ENCODE measurements at regions of chr14 and their contacts with region 1.

Region 1: DNA sequence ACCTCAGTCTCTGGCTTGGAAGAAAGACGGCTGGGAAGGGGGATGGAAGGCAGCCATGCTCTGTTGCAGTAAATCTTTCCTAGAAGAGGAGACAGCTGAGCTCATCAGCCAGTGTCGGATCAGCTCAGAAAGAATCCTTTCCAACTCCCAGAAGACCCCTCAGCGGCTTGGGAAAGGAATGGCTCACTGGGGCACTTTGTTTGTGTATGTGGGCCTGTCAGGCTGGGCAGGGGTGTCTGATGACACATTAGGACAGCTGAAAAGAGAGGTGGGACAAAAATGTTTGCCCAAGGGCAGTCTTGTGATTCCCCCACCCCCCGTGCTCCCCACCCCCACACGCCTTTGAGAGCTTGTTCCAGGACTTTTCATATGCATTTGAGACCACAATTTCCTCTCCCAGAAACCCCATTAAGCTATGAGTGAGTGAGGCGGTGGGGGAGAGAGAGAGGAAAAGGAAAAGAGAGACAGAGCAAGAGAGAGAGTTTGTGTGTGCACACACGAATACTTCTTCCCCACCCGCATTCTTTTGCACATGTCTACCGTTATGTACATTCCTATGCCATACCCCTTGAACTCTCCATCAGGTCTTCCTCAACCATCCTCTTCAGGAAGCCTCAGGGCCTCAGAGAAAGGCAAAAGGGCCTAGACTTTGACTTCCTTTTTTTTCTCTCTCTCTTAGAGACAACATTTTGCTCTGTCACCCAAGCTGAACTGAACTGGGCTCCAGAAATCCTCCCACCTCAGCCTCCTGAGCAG is 198.9 kb downstream of the ZFP36L1 start:
- DNase-seq: no peak
- H3K4me3 ChIP-seq: no peak overlapping the region
- H3K27ac ChIP-seq: peak overlapping the region in 2 of 4 donors; percentile 16 to 92
- H3K4me1 ChIP-seq: peaks cover 0 to 61% (median 43%) of the 10 kb centered on the region in 4 donors
- H3K27me3 ChIP-seq: no peaks in the 10 kb centered on the region
- CTCF ChIP-seq: no peak
- EP300 ChIP-seq: no peak
- POLR2A ChIP-seq: no peak

Region 2: GRCh38 chr14:68386950-68387779 is 206.8 kb before region 1 on chr14:
- intact Hi-C with region 1: loop called (anchors 5 kb)
- DNase-seq: no peak
- H3K4me3 ChIP-seq: no peak overlapping the region
- H3K27ac ChIP-seq: peak overlapping the region in 3 of 4 donors; percentile 42 to 77 (median 74)
- H3K4me1 ChIP-seq: peaks cover 0 to 77% (median 58%) of the 10 kb centered on the region in 4 donors
- H3K27me3 ChIP-seq: no peaks in the 10 kb centered on the region
- CTCF ChIP-seq: no peak
- EP300 ChIP-seq: peak in 2 of 4 donors; percentile 58 to 64
- POLR2A ChIP-seq: no peak

Region 3: DNA sequence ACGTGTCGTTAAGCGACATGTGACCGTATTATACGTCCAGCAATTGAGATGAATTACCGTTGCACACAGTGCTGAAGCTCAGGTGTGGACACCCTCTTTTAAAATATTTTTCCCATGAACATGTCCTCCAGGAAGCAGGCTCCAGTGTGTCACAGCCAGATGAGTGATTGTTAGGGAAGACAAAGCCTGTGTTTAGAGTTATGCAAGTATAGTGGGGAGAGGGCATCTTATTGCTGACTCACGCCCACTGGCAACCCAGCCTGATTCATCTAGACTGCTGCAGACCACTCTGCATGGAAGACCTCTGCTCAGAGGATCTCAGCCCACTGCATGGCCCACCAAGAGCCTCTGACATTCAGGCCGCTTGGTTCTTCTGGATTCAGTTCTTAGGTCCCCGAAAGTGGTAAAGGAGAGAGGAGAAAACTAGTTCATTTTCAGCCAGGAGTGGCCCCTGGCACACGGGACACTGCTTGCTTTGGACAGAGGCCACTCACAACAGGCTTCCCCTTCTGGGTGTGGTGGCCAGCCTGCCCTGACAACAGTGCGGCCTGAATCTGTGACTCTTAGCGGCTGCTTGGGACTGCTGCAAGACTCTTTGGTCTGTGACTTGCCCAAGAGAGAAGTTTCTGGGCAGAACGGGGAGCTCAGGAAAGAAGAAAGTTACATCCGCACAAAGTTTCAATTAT is 67.4 kb before region 1 on chr14:
- intact Hi-C with region 1: loop called (anchors 2 kb)
- DNase-seq: no peak
- H3K4me3 ChIP-seq: no peak overlapping the region
- H3K27ac ChIP-seq: peak overlapping the region; percentile 49 to 73 (median 66)
- H3K4me1 ChIP-seq: peaks cover 0 to 52% (median 38%) of the 10 kb centered on the region in 4 donors
- H3K27me3 ChIP-seq: no peaks in the 10 kb centered on the region
- CTCF ChIP-seq: no peak
- EP300 ChIP-seq: no peak
- POLR2A ChIP-seq: no peak

Region 4: DNA sequence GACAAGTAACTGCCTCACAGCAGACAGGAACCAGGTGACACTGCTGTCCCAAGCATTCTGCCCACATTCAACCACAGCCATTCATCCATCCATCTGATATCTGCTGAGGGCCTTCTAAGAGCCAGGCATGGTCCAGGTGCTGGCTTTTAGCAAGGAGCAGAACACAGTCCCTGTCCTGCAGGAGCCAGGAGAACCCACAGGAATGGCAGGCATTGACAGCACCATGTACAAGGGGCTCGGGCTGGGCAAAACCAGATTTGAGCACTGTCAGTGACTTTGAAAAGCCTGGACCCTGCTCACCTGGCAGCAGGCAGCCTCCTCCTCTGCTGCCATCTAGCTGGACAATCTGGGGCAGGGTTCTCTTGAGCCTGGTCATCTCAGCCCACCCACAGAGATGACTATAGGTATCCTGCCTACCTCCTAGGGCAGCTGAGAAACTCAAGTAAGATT is 62.0 kb after region 1 on chr14:
- intact Hi-C with region 1: loop called (anchors 2 kb)
- DNase-seq: no peak
- H3K4me3 ChIP-seq: no peak overlapping the region
- H3K27ac ChIP-seq: peak overlapping the region; percentile 7 to 95 (median 91)
- H3K4me1 ChIP-seq: peaks cover 0 to 86% (median 78%) of the 10 kb centered on the region in 4 donors
- H3K27me3 ChIP-seq: no peaks in the 10 kb centered on the region
- CTCF ChIP-seq: no peak
- EP300 ChIP-seq: no peak
- POLR2A ChIP-seq: no peak

Region 5: DNA sequence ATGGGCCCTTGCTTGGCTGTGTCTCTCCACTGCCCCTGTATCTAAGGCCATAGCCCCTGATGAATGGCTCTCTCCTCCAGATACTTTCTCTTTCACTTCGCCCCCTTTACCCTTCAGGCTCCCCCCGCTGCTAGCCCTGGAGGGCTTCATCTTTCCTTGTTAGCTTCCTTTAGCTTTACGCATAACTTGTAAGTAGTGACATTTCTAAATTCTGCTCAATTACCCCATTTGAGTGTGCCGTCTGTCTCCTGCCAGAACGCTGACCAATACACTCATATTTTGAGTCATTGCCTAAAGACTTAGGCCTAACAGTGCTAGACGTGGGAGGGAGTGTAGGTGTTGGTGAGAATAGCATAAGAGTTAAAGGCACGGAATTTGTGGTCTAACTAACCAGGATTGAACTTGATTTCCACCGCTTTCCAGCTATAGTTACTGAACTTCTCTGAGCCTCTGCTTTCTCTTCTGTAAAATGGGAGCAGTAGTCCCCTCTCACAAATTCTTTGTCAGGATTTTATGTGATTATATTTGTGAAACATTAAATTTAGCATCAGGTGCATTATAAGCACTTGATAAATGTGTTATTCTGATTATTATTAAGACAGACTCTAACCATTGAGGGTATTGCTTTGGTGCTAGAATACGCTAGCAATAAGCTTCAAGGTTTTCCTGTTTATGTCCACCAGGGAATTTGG is 69.5 kb after region 1 on chr14:
- intact Hi-C with region 1: loop called (anchors 5 kb)
- DNase-seq: peak; percentile 56
- H3K4me3 ChIP-seq: no peak overlapping the region
- H3K27ac ChIP-seq: peak overlapping the region; percentile 70 to 88 (median 81)
- H3K4me1 ChIP-seq: peaks cover 0 to 87% (median 73%) of the 10 kb centered on the region in 4 donors
- H3K27me3 ChIP-seq: no peaks in the 10 kb centered on the region
- CTCF ChIP-seq: no peak
- EP300 ChIP-seq: no peak
- POLR2A ChIP-seq: no peak

Region 6: DNA sequence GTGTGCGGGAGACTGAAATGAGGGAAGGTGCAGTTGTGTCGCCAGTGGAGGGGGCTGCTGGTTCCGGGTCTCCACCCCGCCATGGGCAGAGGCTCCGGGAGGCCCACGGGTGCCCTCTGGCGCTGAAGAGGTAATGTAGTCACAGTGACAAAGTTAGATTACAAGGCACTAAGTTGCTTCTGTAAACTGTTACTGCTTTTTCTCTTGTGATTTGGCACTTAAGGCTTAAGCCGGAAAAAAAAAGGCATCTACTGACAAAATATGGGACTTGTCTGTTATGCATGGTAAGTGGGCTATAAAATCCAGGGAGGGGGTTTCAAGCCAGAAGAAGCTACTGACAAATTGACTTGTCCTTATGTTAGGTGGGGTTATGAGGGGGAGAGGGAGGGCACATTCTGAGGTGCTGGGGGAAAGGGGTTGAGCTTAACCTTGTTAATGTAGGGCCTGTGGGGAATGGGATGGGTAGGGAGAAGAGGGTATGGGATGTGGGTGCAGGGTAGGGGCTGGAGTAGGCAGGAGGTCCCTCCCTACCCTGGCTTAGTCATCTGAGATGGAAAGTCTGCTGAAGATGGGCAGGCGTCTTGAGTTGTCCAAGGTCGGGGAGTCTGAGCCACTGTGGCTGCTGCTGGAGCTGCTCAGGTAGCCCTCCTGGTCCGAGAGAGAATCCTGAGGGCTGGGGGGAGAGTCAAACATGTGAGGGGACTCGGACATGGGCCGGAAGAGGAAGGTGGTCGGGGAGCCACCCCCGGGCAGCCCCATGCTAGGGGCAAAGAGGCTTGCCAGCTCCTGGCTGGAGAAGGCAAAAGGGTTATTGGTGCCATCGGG is 195.2 kb after region 1 on chr14:
- intact Hi-C with region 1: loop called (anchors 2 kb)
- DNase-seq: peak; percentile 95
- H3K4me3 ChIP-seq: peak overlapping the region; percentile 76 to 88 (median 80)
- H3K27ac ChIP-seq: peak overlapping the region; percentile 98 to 100 (median 99)
- H3K4me1 ChIP-seq: peaks cover 0 to 28% (median 24%) of the 10 kb centered on the region in 4 donors
- H3K27me3 ChIP-seq: no peaks in the 10 kb centered on the region
- CTCF ChIP-seq: peak in 3 of 4 experiments; percentile 50 to 67 (median 56)
- EP300 ChIP-seq: peak in 1 of 4 donors; percentile 3
- POLR2A ChIP-seq: no peak